Natural killer cell (primary cell): ENCODE measurements at regions of chr3 and their contacts with region 1.

Region 1: DNA sequence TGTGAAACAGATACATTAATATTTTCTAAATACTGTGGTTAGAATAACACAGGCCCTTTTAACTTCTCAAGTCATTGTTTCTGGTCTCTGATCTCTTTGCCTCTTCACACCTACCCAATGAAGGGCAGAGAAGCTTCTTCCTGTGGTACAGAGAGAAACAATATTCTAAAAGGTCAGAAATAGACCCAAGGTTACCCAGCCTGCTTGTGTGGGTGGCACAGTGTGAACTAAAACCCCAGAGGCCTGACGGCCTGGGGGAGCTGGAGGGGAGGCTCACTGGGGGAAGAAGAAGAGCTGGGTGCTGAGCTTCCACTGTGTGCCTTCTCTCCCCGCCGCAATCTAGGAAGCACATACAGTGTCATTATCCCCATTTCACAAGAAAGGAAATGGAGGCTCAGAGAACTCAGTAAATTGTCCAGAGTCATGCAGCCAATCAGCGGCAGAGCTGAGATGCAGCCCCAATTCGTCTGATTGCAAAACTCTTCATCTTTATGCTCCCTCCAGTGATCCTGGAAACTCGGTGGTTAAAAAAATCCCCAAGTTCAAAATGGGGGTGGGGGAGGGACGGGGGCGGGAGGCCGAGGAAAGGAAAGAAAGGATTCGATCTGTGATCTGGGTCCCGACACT is 64.1 kb upstream of the HEG1 start:
- DNase-seq: peak; percentile 41 to 50
- ATAC-seq: peak; percentile 76 to 92 (median 78)
- H3K4me3 ChIP-seq: no peak overlapping the region
- H3K4me3 Mint-ChIP-seq: peak overlapping the region; percentile 81
- H3K27ac ChIP-seq: peak overlapping the region; percentile 79
- H3K27ac Mint-ChIP-seq: peak overlapping the region; percentile 92 to 98
- H3K4me1 ChIP-seq: peaks cover 70% of the 10 kb centered on the region
- H3K4me1 Mint-ChIP-seq: peaks cover 67 to 70% of the 10 kb centered on the region in 2 donors
- H3K27me3 ChIP-seq: no peaks in the 10 kb centered on the region
- H3K27me3 Mint-ChIP-seq: no peaks in the 10 kb centered on the region
- CTCF ChIP-seq: no peak

Region 2: GRCh38 chr3:124887177-124887931 is 232.5 kb before region 1 on chr3 and contains the start of gene ITGB5:
- intact Hi-C with region 1: no loop called
- DNase-seq: peak; percentile 19 to 23
- ATAC-seq: peak; percentile 61 to 72 (median 65)
- H3K4me3 ChIP-seq: peak within 1 kb of the TSS; percentile 20
- H3K4me3 Mint-ChIP-seq: peak within 1 kb of the TSS; percentile 83
- H3K27ac ChIP-seq: no peak within 1 kb of the TSS
- H3K27ac Mint-ChIP-seq: no peak within 1 kb of the TSS
- H3K4me1 ChIP-seq: peaks cover 11% of the 10 kb centered on the region
- H3K4me1 Mint-ChIP-seq: peaks cover 0 to 5% of the 10 kb centered on the region in 2 donors
- H3K27me3 ChIP-seq: peaks cover 15% of the 10 kb centered on the region
- H3K27me3 Mint-ChIP-seq: peaks cover 46 to 53% of the 10 kb centered on the region in 2 donors
- CTCF ChIP-seq: no peak
- total RNA-seq, gene ITGB5: 1.0 to 8.4 (median 5.4) TPM

Region 3: GRCh38 chr3:125150525-125151441 is 30.9 kb after region 1 on chr3:
- intact Hi-C with region 1: loop called (anchors 5 kb)
- DNase-seq: peak in 1 of 2 donors; percentile 73
- ATAC-seq: peak in 2 of 3 donors; percentile 52
- H3K4me3 ChIP-seq: no peak overlapping the region
- H3K4me3 Mint-ChIP-seq: no peak overlapping the region
- H3K27ac ChIP-seq: no peak overlapping the region
- H3K27ac Mint-ChIP-seq: no peak overlapping the region
- H3K4me1 ChIP-seq: peaks cover 59% of the 10 kb centered on the region
- H3K4me1 Mint-ChIP-seq: peaks cover 45 to 61% of the 10 kb centered on the region in 2 donors
- H3K27me3 ChIP-seq: no peaks in the 10 kb centered on the region
- H3K27me3 Mint-ChIP-seq: no peaks in the 10 kb centered on the region
- CTCF ChIP-seq: peak; percentile 46